HAP-1 (cell line): ENCODE measurements at regions of chr17 and their contacts with region 1.

Region 1: DNA sequence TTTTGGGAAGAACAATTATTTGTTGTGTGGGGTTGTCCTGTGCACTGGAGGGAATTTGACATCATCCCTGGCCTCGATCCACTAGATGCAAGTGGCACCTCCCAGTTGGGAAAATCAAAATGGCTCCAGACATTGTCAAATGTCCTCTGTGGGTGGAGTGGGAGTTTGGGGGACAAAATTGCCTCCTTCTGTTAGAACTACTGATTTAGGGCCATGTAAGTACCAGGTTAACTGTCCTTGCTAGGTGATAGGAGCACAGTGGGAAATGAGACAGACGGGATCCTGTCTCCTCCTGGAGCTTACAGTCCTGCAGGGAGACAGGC is 56.8 kb downstream of the ARHGAP23 start:
- DNase-seq: no peak
- H3K4me3 ChIP-seq: no peak overlapping the region
- H3K4me1 ChIP-seq: peaks cover 7% of the 10 kb centered on the region
- H3K27me3 ChIP-seq: no peaks in the 10 kb centered on the region

Region 2: DNA sequence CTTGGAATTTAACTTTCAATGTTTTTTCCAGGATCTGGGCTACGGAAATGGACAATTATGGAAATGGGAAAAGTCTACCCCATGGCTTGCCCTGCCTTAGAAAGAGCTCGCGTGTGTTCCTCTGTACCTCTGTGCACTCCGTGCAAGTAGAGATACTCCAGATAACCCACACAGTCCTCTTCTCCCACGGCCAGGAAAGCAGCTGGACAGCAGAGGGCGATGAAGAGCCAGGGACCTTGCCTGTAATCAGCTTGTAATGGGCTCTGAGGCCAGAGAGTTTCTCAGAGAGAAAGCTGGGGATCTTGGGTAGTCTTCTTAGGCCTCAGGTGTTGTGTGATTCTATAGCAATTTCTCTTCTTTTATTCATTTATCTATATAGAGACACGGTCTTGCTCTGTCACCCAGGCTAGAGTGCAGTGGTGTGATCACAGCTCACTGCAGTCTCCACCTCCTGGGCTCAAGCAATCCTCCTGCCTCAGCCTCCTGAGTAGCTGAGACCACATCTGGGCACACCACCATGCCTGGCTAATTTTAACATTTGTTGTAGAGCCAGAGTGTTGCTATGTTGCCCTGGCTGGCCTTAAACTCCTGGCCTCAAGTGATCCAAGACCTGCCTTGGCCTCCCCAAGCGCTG is 135.9 kb before region 1 on chr17:
- in situ Hi-C with region 1: loop called (anchors 10 kb)
- DNase-seq: peak; percentile 70 to 92
- H3K4me3 ChIP-seq: no peak overlapping the region
- H3K4me1 ChIP-seq: peaks cover 22% of the 10 kb centered on the region
- H3K27me3 ChIP-seq: no peaks in the 10 kb centered on the region

Region 3: GRCh38 chr17:38428112-38428642 is 56.9 kb before region 1 on chr17 and contains the start of gene ARHGAP23:
- in situ Hi-C with region 1: loop called (anchors 10 kb)
- DNase-seq: peak in 1 of 2 experiments; percentile 53
- H3K4me3 ChIP-seq: peak within 1 kb of the TSS; percentile 18
- H3K4me1 ChIP-seq: no peaks in the 10 kb centered on the region
- H3K27me3 ChIP-seq: peaks cover 7% of the 10 kb centered on the region; the same call in 1 of the 2 replicates

Region 4: DNA sequence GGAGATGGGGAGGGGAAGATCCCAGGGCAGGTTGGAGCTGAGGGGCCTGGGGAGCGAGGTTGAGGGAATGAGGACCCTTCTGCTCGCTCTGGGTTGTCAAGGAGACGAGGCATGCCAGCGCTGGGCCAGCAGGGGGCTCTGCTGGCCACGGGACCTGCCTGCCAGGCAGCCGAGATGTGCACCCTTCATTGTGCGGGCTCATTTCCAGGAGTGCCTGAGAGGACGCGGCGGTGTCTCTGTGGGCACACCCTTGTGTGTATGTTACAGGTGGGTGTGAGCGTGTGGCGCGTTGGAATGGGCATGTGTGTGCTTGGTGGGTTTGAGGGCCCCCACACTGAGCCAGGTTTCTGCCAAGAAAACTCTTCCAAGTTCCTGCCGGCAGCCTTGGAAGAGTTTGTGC is 41.0 kb before region 1 on chr17:
- in situ Hi-C with region 1: loop called (anchors 5 kb)
- DNase-seq: peak; percentile 51 to 79
- H3K4me3 ChIP-seq: no peak overlapping the region
- H3K4me1 ChIP-seq: peaks cover 5% of the 10 kb centered on the region
- H3K27me3 ChIP-seq: peaks cover 26% of the 10 kb centered on the region

Region 5: DNA sequence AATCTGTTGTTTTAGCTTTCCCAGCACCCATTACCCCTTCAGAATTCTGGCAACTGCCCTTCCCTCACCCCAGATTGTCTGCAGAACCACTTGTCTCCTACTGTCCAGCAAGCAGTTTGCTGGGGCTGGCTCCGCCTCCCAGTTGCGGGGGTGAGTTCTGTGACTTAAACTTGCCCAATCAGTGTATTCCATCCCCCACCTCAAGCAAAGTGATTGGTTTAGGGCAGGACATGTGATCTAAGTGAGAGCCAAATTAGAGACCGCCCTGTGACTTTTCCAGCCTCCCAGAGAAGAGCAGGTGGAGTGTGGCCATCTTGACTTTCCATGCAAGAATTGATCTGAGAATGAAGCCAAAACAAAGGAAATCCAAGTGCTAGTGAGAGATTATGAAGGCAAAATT is 143.3 kb after region 1 on chr17:
- in situ Hi-C with region 1: no loop called
- DNase-seq: peak in 1 of 2 experiments; percentile 67
- H3K4me3 ChIP-seq: no peak overlapping the region
- H3K4me1 ChIP-seq: peaks cover 5% of the 10 kb centered on the region
- H3K27me3 ChIP-seq: no peaks in the 10 kb centered on the region

Region 6: GRCh38 chr17:38667099-38667786 is 182.1 kb after region 1 on chr17:
- in situ Hi-C with region 1: loop called (anchors 5 kb)
- DNase-seq: peak; percentile 75 to 85
- H3K4me3 ChIP-seq: no peak overlapping the region
- H3K4me1 ChIP-seq: peaks cover 6% of the 10 kb centered on the region; the same call in 1 of the 2 replicates
- H3K27me3 ChIP-seq: 0 out of 2 replicates have a peak, but pooled peaks cover 3% of the 10 kb centered on the region

Region 7: DNA sequence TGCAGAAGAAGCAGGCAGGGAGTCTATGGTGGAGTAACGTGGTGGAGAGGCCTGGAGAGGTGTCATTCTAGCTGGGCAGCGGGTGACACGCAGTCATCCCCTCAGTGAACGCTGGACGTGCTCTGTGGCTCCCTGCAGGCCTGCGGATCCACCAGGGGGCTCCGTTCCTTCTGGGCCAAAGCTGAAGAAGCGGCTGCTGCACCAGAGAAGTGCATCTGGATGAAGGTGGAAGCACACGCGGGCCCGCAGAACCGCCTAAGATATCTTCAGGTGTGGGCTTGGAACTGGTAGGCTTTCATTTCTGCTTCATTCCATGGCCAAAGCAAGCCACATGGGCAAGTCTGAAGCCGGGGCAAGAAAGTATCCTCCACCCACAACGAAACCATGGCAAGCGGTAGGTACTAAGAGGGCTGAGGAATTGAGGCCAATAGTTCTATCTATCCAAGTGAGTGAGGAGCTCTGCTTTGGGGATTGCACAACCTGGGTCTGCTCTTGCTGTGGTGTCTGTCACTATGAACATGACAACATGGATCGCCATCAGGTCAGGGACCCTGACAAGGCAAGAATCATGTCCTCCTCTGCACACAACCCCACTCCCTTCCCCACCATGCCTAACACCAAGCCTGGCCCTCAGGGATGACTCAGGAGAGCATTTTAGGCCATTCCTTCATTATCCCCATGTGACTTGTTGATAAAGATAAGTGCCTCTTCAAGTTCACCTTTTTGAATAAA is 561.0 kb after region 1 on chr17:
- in situ Hi-C with region 1: no loop called
- DNase-seq: peak in 1 of 2 experiments; percentile 26
- H3K4me3 ChIP-seq: no peak overlapping the region
- H3K4me1 ChIP-seq: no peaks in the 10 kb centered on the region
- H3K27me3 ChIP-seq: no peaks in the 10 kb centered on the region